ENCODE measurements at regions of chr13 and their contacts with region 1.

Region 1: GRCh38 chr13:85665286-85665685 is 133.9 kb downstream of the SLITRK6 start:
- DNase-seq: no peak
- H3K4me3 Mint-ChIP-seq: no peak overlapping the region
- H3K27ac Mint-ChIP-seq: no peak overlapping the region
- H3K4me1 Mint-ChIP-seq: no peaks in the 10 kb centered on the region
- H3K27me3 Mint-ChIP-seq: no peaks in the 10 kb centered on the region

Region 2: GRCh38 chr13:85864963-85865530 is 199.8 kb after region 1 on chr13:
- intact Hi-C with region 1: no loop called
- DNase-seq: no peak
- H3K4me3 Mint-ChIP-seq: no peak overlapping the region
- H3K27ac Mint-ChIP-seq: no peak overlapping the region
- H3K4me1 Mint-ChIP-seq: no peaks in the 10 kb centered on the region
- H3K27me3 Mint-ChIP-seq: no peaks in the 10 kb centered on the region

Region 3: GRCh38 chr13:86038490-86038889 is 373.2 kb after region 1 on chr13:
- intact Hi-C with region 1: no loop called
- DNase-seq: no peak
- H3K4me3 Mint-ChIP-seq: no peak overlapping the region
- H3K27ac Mint-ChIP-seq: no peak overlapping the region
- H3K4me1 Mint-ChIP-seq: no peaks in the 10 kb centered on the region
- H3K27me3 Mint-ChIP-seq: no peaks in the 10 kb centered on the region

Region 4: GRCh38 chr13:87089391-87089790 is 1424.1 kb after region 1 on chr13:
- intact Hi-C with region 1: loop called (anchors 5 kb)
- DNase-seq: no peak
- H3K4me3 Mint-ChIP-seq: no peak overlapping the region
- H3K27ac Mint-ChIP-seq: no peak overlapping the region
- H3K4me1 Mint-ChIP-seq: no peaks in the 10 kb centered on the region
- H3K27me3 Mint-ChIP-seq: no peaks in the 10 kb centered on the region

Measured in activated T-helper 1 cell treated with anti-CD3 and anti-CD28 coated beads, Interleukin-12 subunit alpha, Interleukin-12 subunit beta, Interleukin-2, Interleukin-4 antibody, amounts not matched to agents 30 ng/mL and 10 ng/mL and 1 ng/mL, durations not matched to agents 14 hours and 24 hours and 36 hours (primary cell).